IMR-90 (cell line): ENCODE measurements at regions of chr9 and their contacts with region 1.

Region 1: DNA sequence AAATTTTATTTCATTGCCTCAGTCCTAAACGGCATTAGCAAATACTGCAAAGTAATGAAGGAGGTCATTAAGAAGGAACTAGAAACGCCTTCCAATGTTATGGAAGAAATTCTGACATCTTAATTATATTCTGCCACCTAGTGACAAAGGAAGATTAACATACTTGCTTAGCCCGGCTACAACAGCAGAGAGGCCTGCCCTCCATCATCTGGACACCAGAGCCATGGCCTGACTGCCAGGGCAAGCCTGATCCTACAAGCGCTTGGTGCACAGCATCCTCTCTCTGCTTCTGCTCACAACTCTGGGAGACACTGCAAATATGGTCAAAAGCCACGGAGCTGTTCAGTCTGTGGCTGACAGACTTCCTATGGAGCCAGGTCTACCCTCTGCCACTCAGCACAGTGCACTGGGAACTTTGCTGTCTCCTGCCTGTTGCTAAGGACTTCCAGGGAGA is 87.3 kb upstream of the SLC44A1 start:
- DNase-seq: peak; percentile 77
- ATAC-seq: peak; percentile 93
- H3K4me3 ChIP-seq: no peak overlapping the region
- H3K27ac ChIP-seq: peak overlapping the region; percentile 13; the same call in 1 of the 2 replicates
- H3K4me1 ChIP-seq: peaks cover 7% of the 10 kb centered on the region
- H3K27me3 ChIP-seq: no peaks in the 10 kb centered on the region
- CTCF ChIP-seq: peak; percentile 59
- POLR2A ChIP-seq: no peak
- RAD21 ChIP-seq: peak; percentile 69

Region 2: GRCh38 chr9:104863180-104863883 is 293.8 kb before region 1 on chr9:
- CTCF ChIA-PET with region 1: interaction called, 4 read pairs
- POLR2A ChIA-PET with region 1: no interaction called
- dilution Hi-C with region 1: no loop called
- in situ Hi-C with region 1: loop called (anchors 5 kb)
- intact Hi-C with region 1: loop called (anchors 1 kb)
- DNase-seq: peak; percentile 93
- ATAC-seq: peak; percentile 59
- H3K4me3 ChIP-seq: no peak overlapping the region
- H3K27ac ChIP-seq: peak overlapping the region; percentile 56; the same call in 1 of the 2 replicates
- H3K4me1 ChIP-seq: peaks cover 41% of the 10 kb centered on the region
- H3K27me3 ChIP-seq: no peaks in the 10 kb centered on the region
- CTCF ChIP-seq: peak; percentile 88
- POLR2A ChIP-seq: no peak
- RAD21 ChIP-seq: peak; percentile 86

Region 3: GRCh38 chr9:104991144-104991953 is 165.8 kb before region 1 on chr9:
- CTCF ChIA-PET with region 1: no interaction called
- POLR2A ChIA-PET with region 1: no interaction called
- dilution Hi-C with region 1: no loop called
- in situ Hi-C with region 1: no loop called
- intact Hi-C with region 1: loop called (anchors 1 kb)
- DNase-seq: peak; percentile 82
- ATAC-seq: peak; percentile 85
- H3K4me3 ChIP-seq: peak overlapping the region; percentile 65
- H3K27ac ChIP-seq: peak overlapping the region; percentile 98
- H3K4me1 ChIP-seq: peaks cover 25% of the 10 kb centered on the region
- H3K27me3 ChIP-seq: no peaks in the 10 kb centered on the region
- CTCF ChIP-seq: no peak
- POLR2A ChIP-seq: peak; percentile 37; the same call in 1 of the 2 replicates
- RAD21 ChIP-seq: peak; percentile 27

Region 4: GRCh38 chr9:105093685-105094084 is 63.5 kb before region 1 on chr9:
- CTCF ChIA-PET with region 1: no interaction called
- POLR2A ChIA-PET with region 1: no interaction called
- dilution Hi-C with region 1: no loop called
- in situ Hi-C with region 1: no loop called
- intact Hi-C with region 1: no loop called
- DNase-seq: no peak
- ATAC-seq: no peak
- H3K4me3 ChIP-seq: no peak overlapping the region
- H3K27ac ChIP-seq: no peak overlapping the region
- H3K4me1 ChIP-seq: no peaks in the 10 kb centered on the region
- H3K27me3 ChIP-seq: no peaks in the 10 kb centered on the region
- CTCF ChIP-seq: no peak
- POLR2A ChIP-seq: no peak
- RAD21 ChIP-seq: no peak

Region 5: GRCh38 chr9:105103782-105104181 is 53.4 kb before region 1 on chr9:
- CTCF ChIA-PET with region 1: no interaction called
- POLR2A ChIA-PET with region 1: no interaction called
- dilution Hi-C with region 1: no loop called
- in situ Hi-C with region 1: no loop called
- intact Hi-C with region 1: no loop called
- DNase-seq: peak; percentile 33
- ATAC-seq: 0 out of 2 replicates have a peak, but pooled peaks have one; percentile 14
- H3K4me3 ChIP-seq: no peak overlapping the region
- H3K27ac ChIP-seq: no peak overlapping the region
- H3K4me1 ChIP-seq: no peaks in the 10 kb centered on the region; the same call in 1 of the 2 replicates
- H3K27me3 ChIP-seq: no peaks in the 10 kb centered on the region
- CTCF ChIP-seq: no peak
- POLR2A ChIP-seq: no peak
- RAD21 ChIP-seq: no peak

Region 6: DNA sequence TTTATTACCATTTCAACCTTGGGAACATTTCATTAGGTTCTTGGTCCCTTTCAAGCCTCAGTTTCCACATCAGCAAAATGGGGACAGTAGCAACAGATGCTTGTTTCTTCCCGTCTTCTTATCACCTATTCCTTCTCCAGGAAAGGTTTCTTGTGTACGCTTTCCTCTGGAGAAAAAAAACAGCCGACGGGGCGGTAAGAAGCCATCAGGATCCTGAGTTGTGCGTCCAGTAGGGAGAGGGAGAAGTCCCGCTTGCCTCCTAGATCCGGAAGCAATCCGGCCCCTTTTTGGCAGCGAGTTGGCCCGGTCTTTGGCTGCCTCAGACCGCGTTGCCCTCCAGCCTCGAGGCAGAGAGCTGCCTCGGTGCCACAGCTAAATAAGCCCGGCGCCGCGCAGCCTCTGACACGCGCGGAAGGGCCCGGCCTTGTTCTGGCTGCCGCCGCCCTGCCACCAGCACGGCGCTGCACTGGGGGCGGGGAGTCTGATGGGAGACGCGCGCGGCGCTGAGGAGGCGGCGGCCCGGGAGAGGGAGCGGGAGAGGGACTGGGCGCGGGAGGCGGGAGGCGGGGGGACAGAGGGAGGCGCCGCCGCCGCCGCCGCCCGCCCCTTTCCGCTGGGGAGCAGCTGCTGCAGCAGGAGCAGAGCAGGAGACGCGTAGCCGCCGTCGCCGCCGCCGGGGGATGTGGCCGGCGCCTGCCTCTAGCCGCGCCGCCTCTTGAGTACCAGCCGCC is 87.0 kb after region 1 on chr9 and contains the start of gene SLC44A1:
- CTCF ChIA-PET with region 1: no interaction called
- POLR2A ChIA-PET with region 1: no interaction called
- dilution Hi-C with region 1: no loop called
- in situ Hi-C with region 1: no loop called
- intact Hi-C with region 1: loop called (anchors 2 kb)
- DNase-seq: peak; percentile 92
- ATAC-seq: peak; percentile 98
- H3K4me3 ChIP-seq: peak within 1 kb of the TSS; percentile 63
- H3K27ac ChIP-seq: peak within 1 kb of the TSS; percentile 24
- H3K4me1 ChIP-seq: no peaks in the 10 kb centered on the region; the same call in 1 of the 2 replicates
- H3K27me3 ChIP-seq: no peaks in the 10 kb centered on the region
- CTCF ChIP-seq: no peak
- POLR2A ChIP-seq: no peak
- RAD21 ChIP-seq: peak; percentile 28; the same call in 1 of the 2 replicates
- total RNA-seq, gene SLC44A1: 19.4 and 21.7 TPM in 2 replicates